Right ventricle myocardium superior (tissue), 1 donor: ENCODE measurements at regions of chr7 and their contacts with region 1.

Region 1: GRCh38 chr7:95916573-95917297 is 144.4 kb downstream of the DYNC1I1 start:
- DNase-seq: peak; percentile 87
- ATAC-seq: peak; percentile 92

Region 2: DNA sequence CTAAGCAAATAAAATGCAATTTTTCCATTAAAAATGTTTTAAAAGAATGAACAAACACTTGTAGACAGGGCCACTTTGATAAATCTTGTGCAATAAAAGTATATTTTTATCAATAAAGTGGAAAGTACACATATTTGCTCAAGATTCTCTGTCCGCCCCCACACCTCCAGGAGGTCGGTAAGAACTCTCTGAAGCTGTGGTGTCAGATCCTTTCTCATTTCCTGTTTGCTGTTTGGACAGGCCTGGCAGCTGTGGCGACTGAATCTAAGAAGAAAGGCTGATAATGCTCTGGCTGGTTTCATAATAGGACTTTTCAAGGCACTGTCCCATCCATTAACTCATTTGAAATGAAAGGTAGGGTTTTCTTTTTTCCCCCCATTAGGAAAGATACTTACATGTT is 446.3 kb before region 1 on chr7:
- intact Hi-C with region 1: no loop called
- DNase-seq: no peak
- ATAC-seq: no peak

Region 3: GRCh38 chr7:95817866-95818640 is 98.7 kb before region 1 on chr7:
- intact Hi-C with region 1: no loop called
- DNase-seq: no peak
- ATAC-seq: no peak

Region 4: GRCh38 chr7:96017877-96018276 is 101.1 kb after region 1 on chr7:
- intact Hi-C with region 1: loop called (anchors 10 kb)
- DNase-seq: no peak
- ATAC-seq: no peak

Region 5: GRCh38 chr7:96075510-96076349 is 159.0 kb after region 1 on chr7:
- intact Hi-C with region 1: no loop called
- DNase-seq: peak; percentile 74
- ATAC-seq: peak; percentile 99

Region 6: GRCh38 chr7:97027427-97028234 is 1110.9 kb after region 1 on chr7:
- intact Hi-C with region 1: loop called (anchors 5 kb)
- DNase-seq: peak; percentile 77
- ATAC-seq: peak; percentile 92

Region 7: GRCh38 chr7:97064967-97065587 is 1148.3 kb after region 1 on chr7:
- intact Hi-C with region 1: loop called (anchors 10 kb)
- DNase-seq: no peak
- ATAC-seq: peak; percentile 71